Naive thymus-derived CD4-positive, alpha-beta T cell (primary cell): ENCODE measurements at regions of chr19 and their contacts with region 1.

Region 1: GRCh38 chr19:11505032-11505503 is 571 bp downstream of the ZNF653 start:
- DNase-seq: peak; percentile 92 to 97 (median 94)
- ATAC-seq: peak; percentile 96
- H3K4me3 ChIP-seq: peak overlapping the region; percentile 69
- H3K4me3 Mint-ChIP-seq: peak overlapping the region; percentile 83 to 97 (median 88)
- H3K27ac ChIP-seq: peak overlapping the region; percentile 98
- H3K27ac Mint-ChIP-seq: peak overlapping the region; percentile 83 to 94 (median 87)
- H3K4me1 ChIP-seq: peaks cover 8 to 12% of the 10 kb centered on the region in 2 donors
- H3K4me1 Mint-ChIP-seq: peaks cover 11 to 19% (median 15%) of the 10 kb centered on the region in 7 donors
- H3K27me3 ChIP-seq: no peaks in the 10 kb centered on the region
- H3K27me3 Mint-ChIP-seq: peaks cover 0 to 3% (median 0%) of the 10 kb centered on the region in 5 donors

Region 2: DNA sequence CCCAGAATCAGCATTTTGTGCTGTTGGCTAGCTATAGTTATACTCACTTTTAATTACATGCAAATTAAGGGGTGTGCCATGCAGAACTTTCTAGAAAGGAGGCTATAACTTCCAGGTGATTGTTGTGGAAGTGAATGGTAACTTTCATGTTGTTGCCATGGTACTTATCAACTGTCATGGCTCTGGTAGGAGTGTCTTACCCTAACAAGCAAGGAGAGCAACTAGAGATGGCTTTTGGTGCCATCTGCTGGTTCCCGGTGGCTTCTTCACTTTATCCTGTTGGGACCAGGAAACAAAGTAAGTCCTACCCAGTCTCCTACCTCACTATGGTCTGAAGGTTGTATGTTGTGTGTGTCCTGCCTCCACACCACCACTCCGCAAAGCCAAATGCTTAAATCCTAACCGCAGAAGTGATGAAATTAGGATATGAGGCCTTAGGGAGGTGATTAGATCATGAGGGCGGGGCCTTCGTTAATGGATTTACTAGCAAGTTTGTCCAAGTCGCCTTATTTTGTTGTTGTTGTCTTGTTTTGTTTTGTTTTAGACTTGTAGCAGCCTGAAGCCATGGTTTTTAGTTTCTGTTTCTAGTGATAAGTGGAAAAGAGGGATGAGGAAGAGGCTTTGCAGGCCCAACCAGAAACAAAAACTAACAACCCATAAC is 1708.8 kb before region 1 on chr19:
- CTCF ChIA-PET with region 1: no interaction called
- POLR2A ChIA-PET with region 1: no interaction called
- intact Hi-C with region 1: loop called in 1 of 2 experiments (anchors 5 kb)
- DNase-seq: peak; percentile 55 to 92 (median 87)
- ATAC-seq: peak; percentile 48
- H3K4me3 ChIP-seq: no peak overlapping the region
- H3K4me3 Mint-ChIP-seq: peak overlapping the region in 3 of 10 donors; percentile 16 to 43 (median 16)
- H3K27ac ChIP-seq: peak overlapping the region; percentile 63
- H3K27ac Mint-ChIP-seq: peak overlapping the region; percentile 66 to 97 (median 90)
- H3K4me1 ChIP-seq: peaks cover 0 to 7% of the 10 kb centered on the region in 2 donors
- H3K4me1 Mint-ChIP-seq: peaks cover 15 to 43% (median 34%) of the 10 kb centered on the region in 7 donors
- H3K27me3 ChIP-seq: no peaks in the 10 kb centered on the region
- H3K27me3 Mint-ChIP-seq: peaks cover 0 to 3% (median 0%) of the 10 kb centered on the region in 5 donors

Region 3: GRCh38 chr19:11346092-11346940 is 158.8 kb before region 1 on chr19 and contains the starts of genes CCDC159 and TMEM205:
- CTCF ChIA-PET with region 1: no interaction called
- POLR2A ChIA-PET with region 1: no interaction called
- intact Hi-C with region 1: loop called in 1 of 2 experiments (anchors 1 kb)
- DNase-seq: peak; percentile 82 to 99 (median 98)
- ATAC-seq: peak; percentile 98
- H3K4me3 ChIP-seq: peak within 1 kb of the TSS; percentile 75
- H3K4me3 Mint-ChIP-seq: peak within 1 kb of the TSS; percentile 92 to 100 (median 98)
- H3K27ac ChIP-seq: peak within 1 kb of the TSS; percentile 83
- H3K27ac Mint-ChIP-seq: peak within 1 kb of the TSS; percentile 89 to 98 (median 96)
- H3K4me1 ChIP-seq: peaks cover 13 to 14% of the 10 kb centered on the region in 2 donors
- H3K4me1 Mint-ChIP-seq: peaks cover 22 to 39% (median 29%) of the 10 kb centered on the region in 7 donors
- H3K27me3 ChIP-seq: no peaks in the 10 kb centered on the region
- H3K27me3 Mint-ChIP-seq: no peaks in the 10 kb centered on the region
- total RNA-seq, gene CCDC159: 17.6 to 87.4 (median 84.3) TPM
- total RNA-seq, gene TMEM205: 19.5 to 36.7 (median 29.5) TPM

Region 4: DNA sequence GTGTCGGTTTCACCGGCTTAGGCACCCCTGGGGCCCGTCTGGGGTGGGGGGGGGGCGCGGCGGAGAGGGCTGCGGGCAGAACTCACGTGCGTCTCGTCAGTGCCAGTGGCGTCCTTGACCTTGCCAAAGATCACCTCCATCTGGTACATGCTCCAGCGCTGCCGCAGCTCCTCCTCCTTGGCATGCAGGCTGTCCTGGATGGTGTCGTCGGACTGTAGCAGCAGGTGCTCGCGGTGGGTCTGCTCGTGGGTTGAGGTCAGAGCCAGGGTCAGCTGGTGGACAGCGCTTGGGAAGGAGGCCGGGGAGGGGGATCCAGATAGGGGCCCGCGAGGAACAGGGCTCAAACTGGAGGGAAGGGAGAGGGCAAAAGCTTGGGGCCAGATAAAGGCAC is 81.3 kb before region 1 on chr19:
- CTCF ChIA-PET with region 1: no interaction called
- POLR2A ChIA-PET with region 1: no interaction called
- intact Hi-C with region 1: no loop called
- DNase-seq: no peak
- ATAC-seq: no peak
- H3K4me3 ChIP-seq: no peak overlapping the region
- H3K4me3 Mint-ChIP-seq: peak overlapping the region in 7 of 10 donors; percentile 7 to 85 (median 77)
- H3K27ac ChIP-seq: no peak overlapping the region
- H3K27ac Mint-ChIP-seq: peak overlapping the region in 1 of 9 donors; percentile 41
- H3K4me1 ChIP-seq: peaks cover 14 to 40% of the 10 kb centered on the region in 2 donors
- H3K4me1 Mint-ChIP-seq: peaks cover 27 to 44% (median 33%) of the 10 kb centered on the region in 7 donors
- H3K27me3 ChIP-seq: peaks cover 9 to 36% of the 10 kb centered on the region in 2 donors
- H3K27me3 Mint-ChIP-seq: peaks cover 32 to 50% (median 40%) of the 10 kb centered on the region in 5 donors

Region 5: GRCh38 chr19:11435058-11435832 is 69.8 kb before region 1 on chr19 and contains the starts of genes ODAD3 and PRKCSH:
- CTCF ChIA-PET with region 1: no interaction called
- POLR2A ChIA-PET with region 1: no interaction called
- intact Hi-C with region 1: loop called in 1 of 2 experiments (anchors 1 kb)
- DNase-seq: peak; percentile 90 to 99 (median 97)
- ATAC-seq: peak; percentile 97
- H3K4me3 ChIP-seq: peak within 1 kb of the TSS; percentile 77
- H3K4me3 Mint-ChIP-seq: peak within 1 kb of the TSS; percentile 96 to 100 (median 99)
- H3K27ac ChIP-seq: peak within 1 kb of the TSS; percentile 77
- H3K27ac Mint-ChIP-seq: peak within 1 kb of the TSS; percentile 91 to 98 (median 97)
- H3K4me1 ChIP-seq: peaks cover 13 to 16% of the 10 kb centered on the region in 2 donors
- H3K4me1 Mint-ChIP-seq: peaks cover 10 to 34% (median 24%) of the 10 kb centered on the region in 7 donors
- H3K27me3 ChIP-seq: no peaks in the 10 kb centered on the region
- H3K27me3 Mint-ChIP-seq: peaks cover 0 to 8% (median 0%) of the 10 kb centered on the region in 5 donors
- total RNA-seq, gene ODAD3: not detected
- total RNA-seq, gene PRKCSH: 254 to 332 (median 288) TPM

Region 6: GRCh38 chr19:11446652-11447301 is 58.3 kb before region 1 on chr19:
- CTCF ChIA-PET with region 1: no interaction called
- POLR2A ChIA-PET with region 1: no interaction called
- intact Hi-C with region 1: no loop called
- DNase-seq: peak in 7 of 9 donors; percentile 26 to 61 (median 44)
- ATAC-seq: peak; percentile 80
- H3K4me3 ChIP-seq: no peak overlapping the region
- H3K4me3 Mint-ChIP-seq: no peak overlapping the region
- H3K27ac ChIP-seq: no peak overlapping the region
- H3K27ac Mint-ChIP-seq: peak overlapping the region in 1 of 9 donors; percentile 36
- H3K4me1 ChIP-seq: no peaks in the 10 kb centered on the region
- H3K4me1 Mint-ChIP-seq: peaks cover 0 to 5% (median 3%) of the 10 kb centered on the region in 7 donors
- H3K27me3 ChIP-seq: no peaks in the 10 kb centered on the region
- H3K27me3 Mint-ChIP-seq: no peaks in the 10 kb centered on the region

Region 7: DNA sequence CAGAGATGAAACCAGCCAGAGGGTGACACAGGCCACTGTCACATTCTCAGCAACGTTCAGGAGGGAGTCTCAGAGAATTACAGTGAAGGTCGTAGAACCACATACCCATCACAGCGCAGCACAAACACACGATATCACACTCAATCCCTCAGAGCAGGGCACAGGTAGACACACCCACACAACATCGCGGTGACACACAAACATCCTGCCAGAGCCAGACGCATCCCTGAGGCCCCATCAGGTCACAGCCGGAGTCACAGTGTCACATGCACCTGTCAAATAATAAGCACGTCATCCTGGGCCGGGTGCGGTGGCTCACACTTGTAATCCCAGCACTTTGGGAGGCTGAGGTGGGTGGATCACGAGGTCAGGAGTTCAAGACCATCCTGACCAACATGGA is 41.7 kb before region 1 on chr19:
- CTCF ChIA-PET with region 1: no interaction called
- POLR2A ChIA-PET with region 1: no interaction called
- intact Hi-C with region 1: no loop called
- DNase-seq: peak in 1 of 9 donors; percentile 18
- ATAC-seq: peak; percentile 26
- H3K4me3 ChIP-seq: no peak overlapping the region
- H3K4me3 Mint-ChIP-seq: no peak overlapping the region
- H3K27ac ChIP-seq: no peak overlapping the region
- H3K27ac Mint-ChIP-seq: no peak overlapping the region
- H3K4me1 ChIP-seq: no peaks in the 10 kb centered on the region
- H3K4me1 Mint-ChIP-seq: peaks cover 0 to 3% (median 0%) of the 10 kb centered on the region in 7 donors
- H3K27me3 ChIP-seq: no peaks in the 10 kb centered on the region
- H3K27me3 Mint-ChIP-seq: peaks cover 0 to 13% (median 4%) of the 10 kb centered on the region in 5 donors

Region 8: DNA sequence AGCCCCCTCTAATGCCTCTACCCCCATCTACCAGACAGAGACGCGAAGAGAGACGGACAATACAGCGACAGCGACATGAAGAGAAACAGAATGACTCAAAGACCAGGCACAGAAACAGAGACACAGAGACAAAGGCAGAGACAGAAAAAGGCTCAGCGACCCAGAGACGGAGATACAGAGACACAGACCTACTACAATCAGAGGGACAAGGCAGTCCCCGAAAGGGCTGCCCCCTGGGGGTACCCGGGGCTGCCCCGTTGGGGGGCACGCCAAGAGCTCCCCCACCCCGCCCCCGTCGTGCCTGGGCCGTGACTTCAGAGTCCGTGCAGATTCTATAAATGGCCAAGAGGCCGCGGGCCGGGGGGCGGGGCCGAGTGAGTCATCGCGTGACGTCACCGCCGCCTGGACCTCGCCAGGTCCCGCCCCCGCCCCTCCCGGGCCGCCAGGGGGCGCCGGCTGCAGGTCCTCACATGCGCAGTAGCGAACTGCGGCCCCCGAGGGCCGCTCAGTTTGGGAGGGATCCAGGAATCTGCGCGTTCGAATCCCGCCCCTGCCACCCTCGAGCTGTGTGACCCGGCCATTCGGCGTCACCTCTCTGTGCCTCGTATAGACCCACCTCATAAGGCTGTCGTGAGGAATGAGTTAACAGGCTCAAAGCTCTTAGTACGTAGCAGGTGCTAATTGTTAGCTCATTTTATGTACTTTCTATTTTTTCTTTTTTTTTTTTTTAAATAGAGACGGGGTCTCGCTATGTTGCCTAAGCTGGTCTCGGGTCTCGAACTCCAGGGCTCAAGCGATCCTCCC is 30.9 kb after region 1 on chr19:
- CTCF ChIA-PET with region 1: no interaction called
- POLR2A ChIA-PET with region 1: no interaction called
- intact Hi-C with region 1: loop called in 1 of 2 experiments (anchors 2 kb)
- DNase-seq: peak; percentile 59 to 95 (median 68)
- ATAC-seq: peak; percentile 95
- H3K4me3 ChIP-seq: peak overlapping the region; percentile 52
- H3K4me3 Mint-ChIP-seq: peak overlapping the region; percentile 59 to 88 (median 74)
- H3K27ac ChIP-seq: peak overlapping the region; percentile 43
- H3K27ac Mint-ChIP-seq: peak overlapping the region in 8 of 9 donors; percentile 2 to 88 (median 60)
- H3K4me1 ChIP-seq: peaks cover 5% of the 10 kb centered on the region in 2 donors
- H3K4me1 Mint-ChIP-seq: peaks cover 12 to 22% (median 16%) of the 10 kb centered on the region in 7 donors
- H3K27me3 ChIP-seq: peaks cover 0 to 3% of the 10 kb centered on the region in 2 donors
- H3K27me3 Mint-ChIP-seq: peaks cover 11 to 36% (median 16%) of the 10 kb centered on the region in 5 donors

Region 9: GRCh38 chr19:11587302-11587974 is 82.4 kb after region 1 on chr19:
- CTCF ChIA-PET with region 1: no interaction called
- POLR2A ChIA-PET with region 1: no interaction called
- intact Hi-C with region 1: loop called in 1 of 2 experiments (anchors 2 kb)
- DNase-seq: peak; percentile 58 to 80 (median 66)
- ATAC-seq: peak; percentile 95
- H3K4me3 ChIP-seq: no peak overlapping the region
- H3K4me3 Mint-ChIP-seq: no peak overlapping the region
- H3K27ac ChIP-seq: no peak overlapping the region
- H3K27ac Mint-ChIP-seq: peak overlapping the region in 1 of 9 donors; percentile 36
- H3K4me1 ChIP-seq: no peaks in the 10 kb centered on the region
- H3K4me1 Mint-ChIP-seq: peaks cover 0 to 16% (median 7%) of the 10 kb centered on the region in 7 donors
- H3K27me3 ChIP-seq: no peaks in the 10 kb centered on the region
- H3K27me3 Mint-ChIP-seq: no peaks in the 10 kb centered on the region

Region 10: DNA sequence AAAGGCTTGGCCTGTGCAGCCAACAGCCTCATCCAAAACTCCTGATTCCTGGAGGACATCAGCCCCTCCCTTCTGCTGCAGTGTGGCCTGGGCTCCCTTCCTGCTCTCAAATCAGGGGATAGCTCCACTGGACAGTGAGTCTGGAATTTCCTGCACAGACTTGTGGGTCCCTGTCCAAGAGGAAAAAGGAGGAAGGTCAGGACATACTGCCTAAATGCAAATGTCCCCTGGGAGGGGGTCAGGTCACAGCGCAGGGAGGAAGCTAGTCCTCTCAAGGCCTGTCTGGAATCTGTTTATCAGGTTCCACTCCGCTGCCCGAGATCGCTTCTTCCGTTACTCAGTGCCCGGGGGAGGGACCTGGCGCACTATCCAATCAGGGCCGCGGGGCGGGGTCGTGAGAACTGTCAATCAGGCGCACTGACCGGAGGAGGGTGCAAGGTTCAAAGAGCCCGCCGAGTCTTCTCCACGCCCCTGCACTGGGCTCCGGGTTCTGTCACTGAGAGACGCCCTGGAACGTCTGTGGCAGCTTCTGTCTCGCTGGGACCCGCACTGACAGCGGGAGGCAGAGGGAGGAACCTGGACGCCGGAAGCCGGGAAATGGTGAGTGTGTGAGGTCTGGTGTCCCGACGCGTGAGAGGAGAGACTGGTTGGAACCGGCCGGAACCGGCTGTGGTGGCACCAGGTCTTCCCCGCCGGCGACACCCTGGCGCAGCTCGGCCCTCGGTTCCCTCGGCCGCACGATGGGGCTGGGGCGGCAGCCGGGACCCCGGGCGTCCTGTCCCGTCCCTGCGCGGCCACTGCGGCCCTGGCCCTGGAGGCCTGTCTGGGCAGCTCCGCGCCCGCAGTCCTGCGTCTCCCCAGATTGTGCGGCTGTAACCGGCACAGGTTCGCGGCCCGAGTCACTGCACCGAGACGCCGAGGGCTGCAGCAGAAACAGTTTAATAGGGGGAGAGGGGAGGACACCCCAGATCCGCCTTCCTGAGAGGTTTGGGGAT is 261.8 kb after region 1 on chr19 and contains the start of gene ZNF441:
- CTCF ChIA-PET with region 1: no interaction called
- POLR2A ChIA-PET with region 1: no interaction called
- intact Hi-C with region 1: loop called in 1 of 2 experiments (anchors 1 kb)
- DNase-seq: peak; percentile 76 to 89 (median 87)
- ATAC-seq: peak; percentile 98
- H3K4me3 ChIP-seq: peak within 1 kb of the TSS; percentile 70
- H3K4me3 Mint-ChIP-seq: peak within 1 kb of the TSS; percentile 94 to 99 (median 96)
- H3K27ac ChIP-seq: peak within 1 kb of the TSS; percentile 79
- H3K27ac Mint-ChIP-seq: peak within 1 kb of the TSS; percentile 90 to 98 (median 95)
- H3K4me1 ChIP-seq: peaks cover 4 to 7% of the 10 kb centered on the region in 2 donors
- H3K4me1 Mint-ChIP-seq: peaks cover 15 to 31% (median 27%) of the 10 kb centered on the region in 7 donors
- H3K27me3 ChIP-seq: no peaks in the 10 kb centered on the region
- H3K27me3 Mint-ChIP-seq: peaks cover 0 to 23% (median 5%) of the 10 kb centered on the region in 5 donors
- total RNA-seq, gene ZNF441: 3.9 to 23.8 (median 7.1) TPM